Common myeloid progenitor, CD34-positive (primary cell): ENCODE measurements at regions of chr1 and their contacts with region 1.

Region 1: GRCh38 chr1:157369808-157370521 is 182.3 kb downstream of the FCRL5 start:
- DNase-seq: peak; percentile 67 to 81 (median 81)
- H3K4me3 ChIP-seq: no peak overlapping the region
- H3K27ac ChIP-seq: no peak overlapping the region
- H3K4me1 ChIP-seq: peaks cover 0 to 28% (median 12%) of the 10 kb centered on the region in 4 experiments
- H3K27me3 ChIP-seq: no peaks in the 10 kb centered on the region

Region 2: DNA sequence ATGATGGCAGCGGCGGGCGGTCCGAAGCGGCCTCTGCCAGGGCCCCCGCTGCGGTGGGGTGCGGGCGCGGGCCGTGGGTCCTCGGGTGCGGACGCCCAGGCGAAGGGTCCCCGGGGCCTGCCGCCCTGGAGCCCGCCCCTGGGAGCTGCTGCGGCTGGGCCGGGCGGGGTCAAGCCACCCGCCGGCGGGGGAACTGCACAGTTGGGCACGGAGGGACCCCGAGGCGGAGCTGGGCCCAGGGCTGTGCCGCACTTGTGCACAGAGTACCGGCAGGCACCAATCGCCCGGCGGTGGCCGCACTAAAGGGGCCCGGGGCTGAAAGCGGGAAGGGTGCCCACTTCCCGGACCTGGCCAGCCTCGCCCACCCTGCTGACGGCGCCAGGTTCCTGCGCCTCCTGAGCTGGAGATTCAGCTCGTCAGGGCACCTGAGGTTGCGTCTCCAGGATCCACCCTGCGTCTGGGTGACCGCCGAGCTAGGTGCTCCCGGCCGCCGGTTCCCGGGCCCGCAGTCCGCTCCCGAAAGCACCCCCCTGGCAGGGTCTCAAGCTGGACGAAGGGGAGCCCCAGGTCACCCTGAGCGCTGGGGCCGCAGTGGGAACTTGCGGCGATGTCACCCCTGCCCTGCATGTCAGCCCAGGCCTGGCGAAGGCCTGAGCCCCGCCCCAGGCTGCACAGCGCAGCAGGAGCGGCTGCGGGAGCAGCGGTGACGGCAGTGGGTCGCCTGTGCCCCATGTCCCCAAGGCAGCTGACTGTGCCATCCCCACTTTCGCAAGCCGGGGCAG is 175.0 kb before region 1 on chr1:
- CTCF ChIA-PET with region 1: interaction called, 14 read pairs
- POLR2A ChIA-PET with region 1: no interaction called
- DNase-seq: no peak
- H3K4me3 ChIP-seq: peak overlapping the region in 3 of 7 experiments; percentile 36 to 58 (median 42)
- H3K27ac ChIP-seq: no peak overlapping the region
- H3K4me1 ChIP-seq: peaks cover 0 to 9% (median 4%) of the 10 kb centered on the region in 4 experiments
- H3K27me3 ChIP-seq: peaks cover 0 to 40% (median 20%) of the 10 kb centered on the region in 5 experiments

Region 3: DNA sequence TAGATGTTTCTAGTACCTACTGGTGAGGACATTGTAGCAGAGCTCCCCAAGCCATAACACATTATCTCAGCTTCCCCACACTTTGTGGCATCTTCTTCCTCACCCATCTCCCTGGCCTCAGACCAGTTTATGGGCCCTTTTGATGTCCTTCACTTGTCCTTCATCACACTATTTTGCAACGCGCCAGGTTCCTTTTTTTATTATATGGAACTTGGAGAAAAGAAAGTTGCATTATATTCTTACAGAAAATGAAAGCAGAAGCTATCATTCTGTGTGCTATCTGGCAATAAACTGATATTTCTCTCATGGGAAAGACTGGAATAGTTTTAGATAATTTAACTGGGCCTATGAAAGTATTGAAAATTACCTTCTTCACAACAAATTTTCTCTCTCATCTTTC is 34.9 kb before region 1 on chr1:
- CTCF ChIA-PET with region 1: no interaction called
- POLR2A ChIA-PET with region 1: no interaction called
- DNase-seq: no peak
- H3K4me3 ChIP-seq: no peak overlapping the region
- H3K27ac ChIP-seq: no peak overlapping the region
- H3K4me1 ChIP-seq: peaks cover 0 to 4% (median 0%) of the 10 kb centered on the region in 4 experiments
- H3K27me3 ChIP-seq: no peaks in the 10 kb centered on the region

Region 4: GRCh38 chr1:157380523-157380922 is 10.6 kb after region 1 on chr1:
- CTCF ChIA-PET with region 1: interaction called, 13 read pairs
- POLR2A ChIA-PET with region 1: no interaction called
- DNase-seq: peak in 2 of 3 donors; percentile 54 to 58
- H3K4me3 ChIP-seq: no peak overlapping the region
- H3K27ac ChIP-seq: no peak overlapping the region
- H3K4me1 ChIP-seq: peaks cover 0 to 19% (median 3%) of the 10 kb centered on the region in 4 experiments
- H3K27me3 ChIP-seq: no peaks in the 10 kb centered on the region

Region 5: GRCh38 chr1:157490467-157491165 is 120.7 kb after region 1 on chr1:
- CTCF ChIA-PET with region 1: interaction called, 32 read pairs
- POLR2A ChIA-PET with region 1: no interaction called
- DNase-seq: peak; percentile 63 to 78 (median 71)
- H3K4me3 ChIP-seq: no peak overlapping the region
- H3K27ac ChIP-seq: no peak overlapping the region
- H3K4me1 ChIP-seq: peaks cover 0 to 24% (median 15%) of the 10 kb centered on the region in 4 experiments
- H3K27me3 ChIP-seq: peaks cover 0 to 2% (median 0%) of the 10 kb centered on the region in 5 experiments